Vagina (tissue), 2 donors: ENCODE measurements at regions of chr20 and their contacts with region 1.

Region 1: DNA sequence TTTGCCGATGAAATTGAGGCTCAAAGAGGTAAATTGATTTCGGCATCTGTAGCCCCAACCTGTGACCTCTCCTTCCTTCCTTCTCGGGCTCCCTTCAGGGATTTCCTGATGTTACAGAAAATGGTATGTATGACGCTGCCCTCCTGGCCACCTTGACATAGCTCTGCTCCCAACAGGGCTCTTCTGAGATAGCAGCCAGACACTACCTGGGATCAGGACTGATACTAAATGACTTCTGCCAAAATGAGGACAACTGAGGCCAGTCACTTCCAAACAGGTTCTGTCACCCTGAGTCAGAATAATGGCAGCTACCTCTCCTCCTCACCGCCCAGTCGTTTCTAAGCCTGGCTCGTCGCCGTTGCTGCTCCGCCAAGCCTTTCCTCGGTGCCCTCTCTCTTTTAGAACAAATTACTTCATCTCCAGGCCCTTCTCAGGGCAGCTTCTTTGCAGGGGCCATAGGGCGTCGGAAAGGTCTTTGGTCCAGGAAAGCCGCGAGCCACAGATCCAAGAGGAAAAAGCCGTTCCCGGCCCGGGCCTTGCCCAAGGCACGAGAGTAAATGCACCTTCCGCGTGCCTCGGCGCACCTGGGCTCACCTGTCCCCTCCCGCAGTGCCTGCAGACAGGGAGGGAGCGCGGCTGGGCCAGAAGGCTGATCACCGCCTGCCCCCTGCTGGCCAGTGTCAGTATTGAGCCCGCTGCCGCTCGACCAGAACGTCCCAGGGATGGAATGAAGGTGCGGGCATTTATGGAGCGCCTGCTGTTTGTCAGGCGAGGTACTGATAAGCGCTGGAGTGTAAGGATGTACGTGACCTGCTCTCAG is 904 bp upstream of the LPIN3 start:
- DNase-seq: no peak
- H3K4me3 ChIP-seq: peak overlapping the region; percentile 44 to 49
- H3K27ac ChIP-seq: peak overlapping the region; percentile 86
- H3K4me1 ChIP-seq: peaks cover 38% of the 10 kb centered on the region
- H3K27me3 ChIP-seq: no peaks in the 10 kb centered on the region
- CTCF ChIP-seq: peak; percentile 93 to 100 (median 97)
- POLR2A ChIP-seq: no peak

Region 2: DNA sequence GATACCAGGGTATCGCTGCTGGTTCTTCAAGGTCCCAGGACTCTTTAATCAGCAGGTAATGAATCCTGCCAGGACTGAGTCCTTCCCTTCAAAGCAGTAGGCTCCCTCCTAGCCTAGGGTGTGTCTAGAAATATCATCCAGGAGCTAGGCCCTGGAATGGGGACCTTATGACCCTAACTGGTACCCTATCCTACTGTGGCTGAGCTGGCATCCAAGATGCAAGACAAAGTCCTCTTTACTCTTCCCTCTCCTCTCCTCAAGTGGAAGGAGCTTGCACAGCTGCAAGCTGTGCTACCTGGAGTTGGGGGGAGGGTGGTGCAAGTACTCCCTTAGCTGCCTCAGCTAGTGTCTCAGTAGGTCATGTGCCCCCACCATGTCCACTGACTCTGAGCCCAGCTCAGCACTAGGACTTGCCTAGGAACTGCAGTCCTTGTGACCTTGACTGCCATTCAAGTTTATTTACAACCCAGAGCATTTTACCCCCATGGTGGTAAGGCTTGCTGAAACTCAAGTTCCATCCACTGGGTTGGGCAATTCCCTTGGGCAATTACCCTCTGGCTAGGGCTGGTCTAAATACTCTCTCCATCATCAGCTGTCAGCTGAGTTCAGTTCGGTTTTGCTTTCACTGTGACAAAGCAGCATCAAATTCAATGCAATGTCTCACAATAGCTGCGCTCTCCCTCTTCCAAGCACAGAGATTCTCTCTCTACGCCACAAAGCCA is 359.4 kb before region 1 on chr20:
- intact Hi-C with region 1: loop called (anchors 10 kb)
- DNase-seq: no peak
- H3K4me3 ChIP-seq: no peak overlapping the region
- H3K27ac ChIP-seq: no peak overlapping the region
- H3K4me1 ChIP-seq: no peaks in the 10 kb centered on the region
- H3K27me3 ChIP-seq: no peaks in the 10 kb centered on the region
- CTCF ChIP-seq: no peak
- POLR2A ChIP-seq: no peak

Region 3: DNA sequence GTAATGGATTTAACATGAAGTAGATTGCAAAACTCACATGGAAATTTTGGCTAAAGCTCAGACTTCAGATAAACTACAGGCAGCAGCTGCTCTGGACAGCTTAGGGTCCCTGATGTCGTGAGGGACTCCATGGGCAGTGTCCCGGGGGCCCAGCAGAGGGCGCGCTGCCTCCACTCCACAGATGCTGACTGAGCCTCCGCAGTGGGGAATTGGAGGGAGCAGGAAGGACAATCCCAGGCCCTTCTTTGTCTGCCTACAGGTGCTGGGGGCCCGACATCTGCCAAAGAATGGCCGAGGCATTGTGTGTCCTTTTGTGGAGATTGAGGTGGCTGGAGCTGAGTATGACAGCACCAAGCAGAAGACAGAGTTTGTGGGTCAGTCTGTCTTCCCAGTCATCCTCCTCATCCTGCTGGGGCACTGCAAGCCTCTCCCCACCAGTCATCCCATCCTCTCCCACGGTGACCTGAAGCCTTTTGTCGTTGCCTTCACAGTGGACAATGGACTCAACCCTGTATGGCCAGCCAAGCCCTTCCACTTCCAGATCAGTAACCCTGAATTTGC is 166.5 kb before region 1 on chr20:
- intact Hi-C with region 1: loop called (anchors 5 kb)
- DNase-seq: peak; percentile 84 to 92
- H3K4me3 ChIP-seq: no peak overlapping the region
- H3K27ac ChIP-seq: peak overlapping the region; percentile 83
- H3K4me1 ChIP-seq: peaks cover 59% of the 10 kb centered on the region
- H3K27me3 ChIP-seq: no peaks in the 10 kb centered on the region
- CTCF ChIP-seq: peak; percentile 94 to 97 (median 97)
- POLR2A ChIP-seq: peak in 1 of 2 donors; percentile 8

Region 4: DNA sequence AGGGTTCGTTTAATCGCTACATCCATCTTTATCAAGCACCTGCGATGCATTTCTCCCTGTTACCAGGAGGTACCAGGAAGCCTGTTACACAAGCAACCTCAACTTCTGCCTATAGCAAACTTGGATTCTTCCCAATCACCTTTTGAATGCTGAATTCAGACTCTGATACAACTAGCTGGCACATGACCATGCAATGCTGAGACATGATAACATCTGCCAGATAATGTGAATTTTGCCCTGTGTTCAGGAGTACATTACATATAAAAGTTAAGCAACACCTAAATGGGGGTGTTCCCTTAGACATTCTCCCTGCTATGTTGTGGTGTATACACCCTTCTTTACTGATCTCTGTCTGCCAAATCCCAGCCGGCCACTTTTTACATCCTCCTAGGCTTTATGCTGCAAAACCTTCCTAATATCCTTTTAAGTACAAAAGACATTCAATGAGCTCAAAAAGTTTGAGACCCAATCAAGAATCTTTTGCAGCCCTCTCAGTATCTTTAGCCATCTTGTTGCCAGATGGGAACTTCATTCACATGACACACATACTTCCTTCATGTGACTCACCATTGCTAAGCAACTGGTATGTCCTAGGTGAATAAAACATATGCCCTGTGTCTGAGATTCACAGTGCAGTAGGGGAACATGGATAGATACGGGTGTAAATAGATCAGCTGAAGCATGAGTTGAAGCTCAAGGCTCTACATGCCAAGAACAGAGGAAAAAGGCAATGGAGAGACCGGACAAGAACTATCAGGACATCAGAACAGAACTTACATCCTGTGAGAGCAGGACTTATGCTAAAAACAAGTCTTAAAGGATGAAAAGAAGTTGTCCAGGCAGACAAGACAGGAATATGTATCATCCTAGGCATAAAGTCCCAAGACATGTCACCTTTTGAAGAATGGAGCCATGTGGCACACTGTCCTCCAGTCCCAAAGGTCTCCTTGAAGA is 106.5 kb before region 1 on chr20:
- intact Hi-C with region 1: loop called (anchors 5 kb)
- DNase-seq: no peak
- H3K4me3 ChIP-seq: no peak overlapping the region
- H3K27ac ChIP-seq: peak overlapping the region; percentile 74
- H3K4me1 ChIP-seq: peaks cover 43% of the 10 kb centered on the region
- H3K27me3 ChIP-seq: no peaks in the 10 kb centered on the region
- CTCF ChIP-seq: no peak
- POLR2A ChIP-seq: no peak

Region 5: GRCh38 chr20:41249406-41250281 is 90.1 kb before region 1 on chr20:
- intact Hi-C with region 1: loop called (anchors 5 kb)
- DNase-seq: no peak
- H3K4me3 ChIP-seq: no peak overlapping the region
- H3K27ac ChIP-seq: peak overlapping the region; percentile 98
- H3K4me1 ChIP-seq: peaks cover 57% of the 10 kb centered on the region
- H3K27me3 ChIP-seq: no peaks in the 10 kb centered on the region
- CTCF ChIP-seq: no peak
- POLR2A ChIP-seq: no peak

Region 6: DNA sequence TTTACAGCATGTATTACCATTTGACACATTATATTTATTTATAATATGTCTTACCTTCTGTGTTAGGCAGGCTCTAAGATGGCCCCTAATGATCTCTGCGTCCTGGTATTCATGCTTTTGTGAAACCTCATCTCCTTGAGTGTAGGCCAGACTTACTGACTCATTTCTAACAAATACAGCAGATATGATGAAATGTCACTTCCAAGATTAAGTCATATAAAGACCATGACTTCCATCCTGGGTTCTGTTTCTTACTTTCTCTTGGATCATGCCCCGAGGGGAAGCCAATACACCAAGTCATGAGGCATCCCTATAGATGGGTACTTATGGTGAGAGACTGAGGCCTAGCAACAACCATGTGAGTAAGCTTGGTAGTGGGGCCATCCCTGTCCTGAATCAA is 52.4 kb before region 1 on chr20:
- intact Hi-C with region 1: no loop called
- DNase-seq: no peak
- H3K4me3 ChIP-seq: no peak overlapping the region
- H3K27ac ChIP-seq: no peak overlapping the region
- H3K4me1 ChIP-seq: peaks cover 10% of the 10 kb centered on the region
- H3K27me3 ChIP-seq: no peaks in the 10 kb centered on the region
- CTCF ChIP-seq: no peak
- POLR2A ChIP-seq: no peak

Region 7: DNA sequence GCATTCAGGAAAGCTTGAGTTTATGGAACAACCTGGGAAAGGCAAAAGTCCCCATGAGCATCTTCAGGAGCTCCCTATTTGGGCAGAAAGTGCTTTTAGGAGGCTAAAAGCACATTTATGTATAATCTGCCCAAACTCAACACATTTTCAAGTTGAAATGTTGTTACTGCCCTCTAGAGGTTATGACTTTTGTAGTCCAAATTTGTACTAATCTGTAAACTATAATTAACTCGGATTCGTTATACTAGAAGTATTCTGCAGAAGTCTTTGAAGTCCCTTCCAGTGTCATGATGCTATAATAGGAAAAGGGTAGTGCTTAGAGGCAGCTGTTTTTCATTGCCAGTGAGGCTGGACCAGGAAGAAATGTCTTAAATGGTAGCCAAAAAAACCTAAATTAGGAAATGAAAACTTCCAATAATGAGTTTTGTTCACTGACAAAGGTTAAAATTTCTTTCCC is 71.7 kb after region 1 on chr20:
- intact Hi-C with region 1: loop called (anchors 5 kb)
- DNase-seq: no peak
- H3K4me3 ChIP-seq: peak overlapping the region in 1 of 2 donors; percentile 7
- H3K27ac ChIP-seq: peak overlapping the region; percentile 56
- H3K4me1 ChIP-seq: peaks cover 24% of the 10 kb centered on the region
- H3K27me3 ChIP-seq: no peaks in the 10 kb centered on the region
- CTCF ChIP-seq: peak in 1 of 3 experiments; percentile 53
- POLR2A ChIP-seq: no peak